Transverse colon (tissue), 4 donors: ENCODE measurements at regions of chr1 and their contacts with region 1.

Region 1: DNA sequence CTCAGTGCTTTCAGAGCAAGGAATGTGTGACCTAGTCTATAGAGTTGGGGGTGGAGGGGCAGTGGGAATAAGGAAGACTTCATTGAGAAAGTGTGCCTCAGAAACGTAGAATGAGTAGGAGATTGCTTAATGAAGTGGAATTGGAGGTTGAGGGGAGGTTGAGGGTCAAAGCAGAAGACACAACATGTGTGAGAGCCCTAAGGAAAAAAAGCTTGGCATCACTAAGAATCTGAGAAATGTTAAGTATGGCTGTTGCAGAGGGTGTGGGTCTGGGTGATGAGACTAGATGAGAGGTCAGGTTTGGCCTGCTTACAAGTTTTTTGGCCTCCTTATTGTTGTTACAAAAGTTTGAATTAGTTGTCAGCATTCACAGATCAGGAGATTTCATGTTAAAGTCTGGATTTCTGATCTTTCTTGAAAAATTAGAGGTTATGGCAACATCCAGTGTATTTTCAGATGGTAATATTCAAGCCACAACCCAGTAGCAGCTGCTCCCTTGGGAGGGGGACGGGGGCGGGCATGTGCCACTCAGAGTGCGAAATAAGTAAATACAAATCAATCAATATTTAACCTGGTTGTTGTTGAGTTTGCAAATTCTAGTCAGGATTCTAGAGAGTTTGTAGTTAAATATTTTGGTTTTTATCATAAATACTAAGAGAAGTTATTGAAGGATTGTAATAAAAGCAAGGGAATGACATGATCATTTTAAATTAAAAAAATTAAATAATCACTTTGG is 4.3 kb downstream of the MAN1A2 start:
- DNase-seq: no peak
- H3K4me3 ChIP-seq: no peak overlapping the region
- H3K27ac ChIP-seq: no peak overlapping the region
- H3K4me1 ChIP-seq: peaks cover 3 to 48% (median 30%) of the 10 kb centered on the region in 4 donors
- H3K27me3 ChIP-seq: no peaks in the 10 kb centered on the region
- CTCF ChIP-seq: no peak
- EP300 ChIP-seq: no peak
- POLR2A ChIP-seq: no peak

Region 2: GRCh38 chr1:116397728-116398127 is 973.9 kb before region 1 on chr1:
- in situ Hi-C with region 1: no loop called
- intact Hi-C with region 1: loop called (anchors 5 kb)
- DNase-seq: no peak
- H3K4me3 ChIP-seq: no peak overlapping the region
- H3K27ac ChIP-seq: no peak overlapping the region
- H3K4me1 ChIP-seq: peaks cover 0 to 3% (median 0%) of the 10 kb centered on the region in 4 donors
- H3K27me3 ChIP-seq: no peaks in the 10 kb centered on the region
- CTCF ChIP-seq: no peak
- EP300 ChIP-seq: no peak
- POLR2A ChIP-seq: no peak

Region 3: DNA sequence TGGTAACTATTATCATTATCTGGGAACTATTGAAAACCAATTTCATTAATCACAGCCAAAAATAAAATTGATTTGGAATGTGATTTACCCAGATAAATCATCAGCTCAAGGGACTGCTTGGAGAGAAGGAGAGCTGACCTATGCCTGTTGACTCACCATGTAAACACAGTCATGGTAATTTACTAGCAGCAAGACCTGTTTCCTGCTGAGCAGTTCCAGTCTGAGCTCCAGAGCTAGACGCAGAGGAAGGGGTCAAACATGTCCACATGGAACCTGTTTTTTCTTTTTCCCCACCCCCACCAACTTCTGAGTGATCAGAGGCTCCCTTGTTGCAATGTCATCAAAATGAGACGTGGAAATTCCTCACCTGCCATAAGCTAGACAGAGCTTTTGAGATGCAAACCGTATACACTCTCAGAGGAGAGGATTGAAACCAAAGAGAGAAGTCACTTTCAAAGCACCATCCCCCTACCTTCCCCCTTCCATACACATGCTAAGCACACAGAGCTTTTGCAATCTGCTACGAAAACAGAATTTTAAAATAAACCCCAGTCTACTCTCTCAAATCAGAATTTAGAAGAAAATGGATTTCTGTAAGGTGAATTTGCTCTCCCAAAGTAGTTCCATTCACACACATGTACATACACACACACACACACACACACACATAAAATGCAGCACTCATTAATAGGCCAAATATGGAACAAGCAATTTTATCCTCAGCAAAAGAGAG is 517.7 kb before region 1 on chr1:
- in situ Hi-C with region 1: no loop called
- intact Hi-C with region 1: no loop called
- DNase-seq: peak; percentile 49
- H3K4me3 ChIP-seq: no peak overlapping the region
- H3K27ac ChIP-seq: peak overlapping the region; percentile 37 to 75 (median 61)
- H3K4me1 ChIP-seq: peaks cover 13 to 35% (median 23%) of the 10 kb centered on the region in 4 donors
- H3K27me3 ChIP-seq: no peaks in the 10 kb centered on the region
- CTCF ChIP-seq: no peak
- EP300 ChIP-seq: no peak
- POLR2A ChIP-seq: no peak